ENCODE measurements at regions of chr12 and their contacts with region 1.

Region 1: DNA sequence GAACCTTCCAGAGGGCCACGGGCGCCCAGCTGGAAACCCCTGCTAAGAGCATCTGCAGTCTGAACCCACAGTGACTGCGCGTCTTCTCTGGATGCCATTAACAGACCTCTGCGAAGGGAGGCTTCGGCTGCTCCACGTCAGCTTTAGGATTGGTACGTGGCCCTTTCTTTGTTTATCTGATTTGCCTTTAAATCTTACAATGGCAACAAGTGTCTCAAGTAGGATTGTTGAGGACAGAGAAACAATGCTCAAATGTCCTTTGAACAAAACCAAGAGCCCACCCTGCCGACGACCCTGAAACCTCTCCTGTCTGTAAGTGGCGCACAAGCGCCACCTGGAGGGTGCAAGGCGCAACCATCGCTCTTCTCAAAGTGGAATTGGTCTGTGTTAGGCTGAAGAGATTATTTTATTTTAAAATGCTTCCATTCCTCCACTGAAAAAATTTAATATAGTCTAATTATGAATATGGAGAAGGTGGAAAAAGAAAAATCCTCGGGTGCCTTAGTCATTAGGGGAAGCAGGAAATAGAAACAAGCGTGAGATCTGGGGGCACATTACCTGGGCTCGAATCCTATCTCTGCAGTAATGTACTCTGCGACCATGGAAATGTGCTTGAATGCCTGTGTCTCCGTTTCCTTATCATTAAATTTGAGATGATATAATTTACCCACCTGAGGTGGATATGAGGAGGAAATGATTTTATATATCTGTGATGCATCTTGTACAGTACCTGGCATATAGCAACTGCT is 82.6 kb upstream of the PTPRB start:
- DNase-seq: no peak
- H3K4me3 ChIP-seq: peak overlapping the region; percentile 24
- H3K27me3 ChIP-seq: no peaks in the 10 kb centered on the region
- CTCF ChIP-seq: peak; percentile 96

Region 2: DNA sequence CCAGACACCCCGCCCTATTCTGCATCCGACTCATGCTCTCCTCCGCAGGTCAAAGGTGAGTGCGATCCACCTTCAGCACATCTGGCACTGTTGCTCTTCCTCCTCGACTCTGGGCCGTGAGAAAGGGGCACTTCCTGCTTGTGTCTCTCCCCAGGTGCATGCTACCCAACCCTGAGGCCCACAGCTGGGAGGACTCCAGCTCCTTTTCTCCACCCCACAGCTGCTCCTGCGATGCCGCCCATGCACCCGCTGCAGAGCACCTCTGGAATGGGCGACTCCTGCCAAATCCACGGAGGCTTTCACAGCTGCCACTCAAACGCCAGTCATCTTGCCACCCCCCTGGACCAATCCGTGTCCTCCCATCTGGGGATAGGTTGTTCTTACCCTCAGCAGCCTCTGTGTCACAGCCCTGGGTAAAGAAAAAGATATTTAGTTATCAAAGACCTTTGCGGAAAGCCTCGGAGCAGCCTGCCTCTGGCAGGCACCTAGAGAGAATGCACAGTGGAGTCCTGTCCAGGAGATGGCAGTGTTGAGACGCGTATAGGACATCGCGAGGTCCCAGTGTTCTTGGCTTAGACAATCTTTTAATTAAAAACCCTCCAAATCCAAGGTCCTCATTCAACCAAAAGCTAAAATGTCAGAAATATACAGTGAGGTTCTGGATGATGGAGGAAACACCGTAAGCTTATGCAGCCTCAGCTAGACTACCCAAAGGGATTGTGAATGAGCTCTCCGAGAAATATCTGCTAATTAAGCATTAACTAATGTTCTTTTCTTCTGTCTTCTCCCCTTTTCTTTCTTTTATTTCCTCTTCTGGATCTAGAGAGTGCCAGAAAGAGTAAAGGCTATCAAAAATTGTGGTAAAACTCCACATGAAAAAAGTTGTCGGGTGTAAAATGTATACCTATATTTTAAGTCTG is 840.5 kb before region 1 on chr12:
- CTCF ChIA-PET with region 1: interaction called, 32 read pairs
- POLR2A ChIA-PET with region 1: no interaction called
- DNase-seq: no peak
- H3K4me3 ChIP-seq: peak overlapping the region; percentile 8; the same call in 1 of the 2 replicates
- H3K27me3 ChIP-seq: no peaks in the 10 kb centered on the region
- CTCF ChIP-seq: peak; percentile 87

Region 3: DNA sequence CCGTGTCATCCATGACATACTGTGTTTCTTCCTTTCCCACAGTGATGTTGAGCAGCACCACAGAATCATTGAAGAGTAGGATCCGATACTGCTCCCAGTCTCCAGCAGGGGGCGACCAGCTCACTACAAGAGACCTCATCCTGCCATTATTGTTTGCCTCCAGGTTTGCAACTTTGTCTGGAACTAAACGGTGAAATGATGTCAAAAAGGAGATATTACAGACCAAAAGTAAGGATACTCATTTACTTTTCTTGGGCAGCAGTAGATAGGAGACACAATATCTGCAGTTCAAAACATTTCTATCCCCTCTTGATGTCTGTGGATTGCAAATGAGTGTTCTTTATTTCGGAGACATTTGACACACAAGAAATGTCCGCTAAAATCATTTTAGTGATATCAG is 129.8 kb before region 1 on chr12:
- CTCF ChIA-PET with region 1: interaction called, 117 read pairs
- POLR2A ChIA-PET with region 1: no interaction called
- DNase-seq: no peak
- H3K4me3 ChIP-seq: no peak overlapping the region
- H3K27me3 ChIP-seq: no peaks in the 10 kb centered on the region
- CTCF ChIP-seq: peak; percentile 91

Region 4: DNA sequence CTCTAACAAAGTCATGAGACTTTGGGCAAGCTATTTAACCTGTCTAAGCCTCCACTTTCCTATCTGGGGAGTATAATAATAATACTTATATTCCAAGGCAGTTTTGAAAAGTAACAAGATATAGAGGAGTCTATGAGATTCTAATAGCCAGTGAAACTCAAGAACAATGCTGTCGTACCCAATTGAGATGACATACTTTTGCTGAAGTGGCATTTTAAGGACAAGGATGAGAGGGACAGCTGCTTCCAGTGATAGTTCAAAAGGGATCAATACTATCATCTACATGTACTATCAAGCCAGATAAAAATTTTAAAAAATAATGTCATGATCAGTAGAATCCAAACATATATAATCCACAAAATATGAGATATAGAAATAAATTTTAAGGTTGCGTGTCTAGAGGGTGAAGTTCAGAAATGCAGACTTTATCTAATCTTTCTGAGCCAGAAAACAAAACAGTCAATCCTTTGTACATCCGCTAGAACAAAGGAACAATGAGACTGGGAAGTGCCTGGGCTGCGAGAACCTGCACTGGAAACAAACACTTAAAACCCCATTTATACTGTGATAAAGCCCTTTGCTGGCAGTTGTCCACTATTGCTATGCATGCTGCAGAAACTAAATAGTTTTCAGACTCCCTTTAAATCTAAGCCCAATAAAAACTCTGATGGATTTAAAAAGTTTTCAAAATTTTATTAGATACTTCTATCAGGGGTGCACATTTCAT is 121.2 kb before region 1 on chr12:
- CTCF ChIA-PET with region 1: interaction called, 117 read pairs
- POLR2A ChIA-PET with region 1: no interaction called
- DNase-seq: no peak
- H3K4me3 ChIP-seq: no peak overlapping the region
- H3K27me3 ChIP-seq: no peaks in the 10 kb centered on the region
- CTCF ChIP-seq: no peak

Region 5: DNA sequence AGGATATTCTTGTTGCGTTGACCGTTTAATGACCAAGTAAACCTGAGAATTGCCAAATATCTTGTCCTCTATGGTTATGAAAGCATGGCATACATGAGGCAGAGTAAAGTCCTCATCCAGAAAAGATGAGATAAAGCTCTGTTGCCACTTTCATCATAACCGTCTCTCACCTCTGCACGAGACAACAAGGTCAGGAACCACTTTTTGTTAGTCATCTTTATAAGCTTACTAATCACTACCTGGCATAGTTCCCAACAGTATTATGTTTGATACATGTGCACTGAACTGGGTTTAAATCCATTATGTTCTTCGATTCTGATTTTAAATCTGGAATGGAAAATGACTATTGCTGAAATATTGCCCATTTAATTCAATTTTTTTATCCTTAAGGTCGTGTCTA is 113.8 kb before region 1 on chr12:
- CTCF ChIA-PET with region 1: interaction called, 10 read pairs
- POLR2A ChIA-PET with region 1: no interaction called
- DNase-seq: no peak
- H3K4me3 ChIP-seq: no peak overlapping the region
- H3K27me3 ChIP-seq: no peaks in the 10 kb centered on the region
- CTCF ChIP-seq: no peak

Region 6: GRCh38 chr12:70692681-70693288 is 27.1 kb before region 1 on chr12:
- CTCF ChIA-PET with region 1: interaction called, 11 read pairs
- POLR2A ChIA-PET with region 1: no interaction called
- DNase-seq: no peak
- H3K4me3 ChIP-seq: no peak overlapping the region
- H3K27me3 ChIP-seq: no peaks in the 10 kb centered on the region
- CTCF ChIP-seq: peak; percentile 58

Region 7: GRCh38 chr12:70733385-70733784 is 13.5 kb after region 1 on chr12:
- CTCF ChIA-PET with region 1: interaction called, 13 read pairs
- POLR2A ChIA-PET with region 1: no interaction called
- DNase-seq: no peak
- H3K4me3 ChIP-seq: no peak overlapping the region
- H3K27me3 ChIP-seq: peaks cover 1% of the 10 kb centered on the region; the same call in 1 of the 2 replicates
- CTCF ChIP-seq: peak; percentile 73

Measured in BJ (cell line).